MCF 10A (cell line): ENCODE measurements at regions of chr5 and their contacts with region 1.

Region 1: GRCh38 chr5:154754460-154755360 is 467 bp upstream of the LARP1 start:
- DNase-seq: peak; percentile 100
- H3K4me3 Mint-ChIP-seq: peak overlapping the region; percentile 82
- H3K27ac Mint-ChIP-seq: peak overlapping the region; percentile 98
- H3K4me1 Mint-ChIP-seq: peaks cover 33% of the 10 kb centered on the region
- H3K27me3 Mint-ChIP-seq: no peaks in the 10 kb centered on the region
- CTCF ChIP-seq: peak; percentile 34

Region 2: DNA sequence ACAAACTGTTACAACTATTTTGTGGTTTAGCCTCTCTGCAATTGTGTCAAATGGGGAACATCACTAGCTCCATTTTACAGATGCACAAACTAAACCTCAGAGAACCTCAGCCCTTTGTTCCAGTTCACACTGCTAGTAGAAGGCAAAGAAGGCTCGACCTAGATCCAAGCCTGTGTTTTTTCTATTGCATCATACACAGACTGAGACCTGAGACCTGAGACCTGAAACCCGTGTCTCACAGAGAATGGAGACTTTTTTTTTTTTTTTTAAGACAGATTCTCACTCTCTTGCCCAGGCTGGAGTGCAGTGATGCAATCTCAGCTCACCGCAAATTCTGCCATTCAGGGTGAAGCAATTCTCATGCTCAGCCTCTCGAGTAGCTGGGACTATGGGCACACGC is 443.3 kb before region 1 on chr5:
- CTCF ChIA-PET with region 1: no interaction called
- POLR2A ChIA-PET with region 1: no interaction called
- intact Hi-C with region 1: no loop called
- DNase-seq: peak; percentile 94
- H3K4me3 Mint-ChIP-seq: no peak overlapping the region
- H3K27ac Mint-ChIP-seq: no peak overlapping the region
- H3K4me1 Mint-ChIP-seq: peaks cover 26% of the 10 kb centered on the region
- H3K27me3 Mint-ChIP-seq: no peaks in the 10 kb centered on the region
- CTCF ChIP-seq: no peak

Region 3: GRCh38 chr5:154683101-154683880 is 71.4 kb before region 1 on chr5:
- CTCF ChIA-PET with region 1: interaction called, 7 read pairs
- POLR2A ChIA-PET with region 1: interaction called, 35 read pairs
- intact Hi-C with region 1: loop called (anchors 1 kb)
- DNase-seq: no peak
- H3K4me3 Mint-ChIP-seq: peak overlapping the region; percentile 81
- H3K27ac Mint-ChIP-seq: peak overlapping the region; percentile 85
- H3K4me1 Mint-ChIP-seq: peaks cover 18% of the 10 kb centered on the region
- H3K27me3 Mint-ChIP-seq: no peaks in the 10 kb centered on the region
- CTCF ChIP-seq: no peak

Region 4: DNA sequence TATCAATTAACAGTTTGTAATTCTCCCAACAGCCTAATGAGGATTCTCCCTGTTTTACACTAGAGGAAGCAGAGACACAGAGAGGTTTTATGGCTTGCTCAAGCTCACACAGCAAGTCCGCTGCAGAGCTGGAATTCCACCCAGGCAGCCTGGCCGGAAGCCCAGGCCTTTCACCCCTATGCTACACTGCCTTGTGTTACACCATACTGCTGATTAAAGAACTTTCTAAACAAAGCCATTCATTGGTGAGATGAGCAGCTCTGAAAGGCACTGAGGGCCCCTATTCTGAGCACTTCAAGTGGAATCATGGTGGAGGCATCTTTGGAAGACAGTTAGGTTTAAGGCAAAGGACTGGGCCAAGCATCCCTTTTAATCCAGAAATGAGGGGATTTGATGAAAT is 14.2 kb before region 1 on chr5:
- CTCF ChIA-PET with region 1: interaction called, 3 read pairs
- POLR2A ChIA-PET with region 1: interaction called, 14 read pairs
- intact Hi-C with region 1: no loop called
- DNase-seq: peak; percentile 39
- H3K4me3 Mint-ChIP-seq: no peak overlapping the region
- H3K27ac Mint-ChIP-seq: no peak overlapping the region
- H3K4me1 Mint-ChIP-seq: no peaks in the 10 kb centered on the region
- H3K27me3 Mint-ChIP-seq: no peaks in the 10 kb centered on the region
- CTCF ChIP-seq: no peak

Region 5: GRCh38 chr5:154783774-154784460 is 29.2 kb after region 1 on chr5:
- CTCF ChIA-PET with region 1: no interaction called
- POLR2A ChIA-PET with region 1: interaction called, 19 read pairs
- intact Hi-C with region 1: no loop called
- DNase-seq: no peak
- H3K4me3 Mint-ChIP-seq: no peak overlapping the region
- H3K27ac Mint-ChIP-seq: peak overlapping the region; percentile 73
- H3K4me1 Mint-ChIP-seq: peaks cover 43% of the 10 kb centered on the region
- H3K27me3 Mint-ChIP-seq: no peaks in the 10 kb centered on the region
- CTCF ChIP-seq: no peak

Region 6: GRCh38 chr5:154857530-154858296 is 103.0 kb after region 1 on chr5:
- CTCF ChIA-PET with region 1: interaction called, 5 read pairs
- POLR2A ChIA-PET with region 1: interaction called, 28 read pairs
- intact Hi-C with region 1: loop called (anchors 2 kb)
- DNase-seq: peak; percentile 99
- H3K4me3 Mint-ChIP-seq: peak overlapping the region; percentile 85
- H3K27ac Mint-ChIP-seq: peak overlapping the region; percentile 95
- H3K4me1 Mint-ChIP-seq: peaks cover 36% of the 10 kb centered on the region
- H3K27me3 Mint-ChIP-seq: no peaks in the 10 kb centered on the region
- CTCF ChIP-seq: no peak

Region 7: DNA sequence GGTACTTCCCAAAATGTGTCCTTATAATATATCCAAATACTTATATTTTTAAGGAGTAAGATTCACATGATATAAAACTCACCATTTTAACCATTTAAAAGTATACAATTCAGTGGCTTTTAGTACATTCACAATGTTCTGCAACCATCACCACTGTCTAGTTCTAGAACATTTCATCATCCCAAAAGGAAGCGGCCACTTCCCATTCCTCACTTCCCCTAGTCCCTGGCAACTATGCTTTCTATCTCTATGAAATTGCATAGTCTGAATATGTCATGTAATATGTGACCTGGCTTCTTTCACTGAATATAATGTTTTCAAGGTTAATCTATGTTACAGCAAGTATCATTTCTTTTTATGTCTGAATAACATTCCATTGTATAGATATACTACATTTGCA is 957.2 kb after region 1 on chr5:
- CTCF ChIA-PET with region 1: no interaction called
- POLR2A ChIA-PET with region 1: no interaction called
- intact Hi-C with region 1: no loop called
- DNase-seq: no peak
- H3K4me3 Mint-ChIP-seq: no peak overlapping the region
- H3K27ac Mint-ChIP-seq: no peak overlapping the region
- H3K4me1 Mint-ChIP-seq: peaks cover 6% of the 10 kb centered on the region
- H3K27me3 Mint-ChIP-seq: no peaks in the 10 kb centered on the region
- CTCF ChIP-seq: no peak